GM10248 (cell line): ENCODE measurements at regions of chr13 and their contacts with region 1.

Region 1: DNA sequence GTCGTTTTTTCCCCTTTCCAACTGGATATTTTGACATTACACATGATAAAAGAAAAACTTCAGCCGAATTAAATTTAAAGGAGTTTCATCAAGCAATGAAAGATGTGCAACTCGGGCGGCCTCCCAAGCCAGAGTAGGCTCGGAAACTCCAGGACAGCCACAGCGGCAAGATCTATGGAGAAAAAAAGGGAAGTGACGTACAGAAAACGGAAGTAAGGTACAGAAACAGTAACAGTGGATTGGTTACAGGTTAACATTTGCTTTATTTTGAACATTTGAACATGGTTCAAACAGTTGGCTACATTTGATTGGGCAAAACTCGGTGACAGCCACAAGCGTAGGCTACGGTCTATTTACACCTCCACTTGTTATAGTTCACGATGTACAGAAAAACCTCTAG is 30.5 kb upstream of the FAM124A start:
- DNase-seq: no peak
- CTCF ChIP-seq: no peak

Region 2: GRCh38 chr13:51202477-51203046 is 10.8 kb after region 1 on chr13:
- CTCF ChIA-PET with region 1: interaction called, 11 read pairs
- POLR2A ChIA-PET with region 1: no interaction called
- DNase-seq: no peak
- CTCF ChIP-seq: no peak